Caco-2 (cell line): ENCODE measurements at regions of chr7 and their contacts with region 1.

Region 1: GRCh38 chr7:148031815-148032214 is 558.8 kb upstream of the C7orf33 start:
- DNase-seq: no peak
- H3K4me3 ChIP-seq: no peak overlapping the region
- H3K4me3 Mint-ChIP-seq: no peak overlapping the region
- H3K27ac Mint-ChIP-seq: no peak overlapping the region
- H3K4me1 ChIP-seq: no peaks in the 10 kb centered on the region
- H3K4me1 Mint-ChIP-seq: no peaks in the 10 kb centered on the region
- H3K27me3 ChIP-seq: no peaks in the 10 kb centered on the region
- H3K27me3 Mint-ChIP-seq: peaks cover 5% of the 10 kb centered on the region
- CTCF ChIP-seq: no peak

Region 2: GRCh38 chr7:146321301-146321700 is 1710.5 kb before region 1 on chr7:
- CTCF ChIA-PET with region 1: no interaction called
- POLR2A ChIA-PET with region 1: no interaction called
- intact Hi-C with region 1: loop called (anchors 5 kb)
- DNase-seq: no peak
- H3K4me3 ChIP-seq: no peak overlapping the region
- H3K4me3 Mint-ChIP-seq: no peak overlapping the region
- H3K27ac Mint-ChIP-seq: no peak overlapping the region
- H3K4me1 ChIP-seq: no peaks in the 10 kb centered on the region
- H3K4me1 Mint-ChIP-seq: no peaks in the 10 kb centered on the region
- H3K27me3 ChIP-seq: no peaks in the 10 kb centered on the region
- H3K27me3 Mint-ChIP-seq: no peaks in the 10 kb centered on the region
- CTCF ChIP-seq: no peak